Endothelial cell of umbilical vein (primary cell): ENCODE measurements at regions of chr18 and their contacts with region 1.

Region 1: GRCh38 chr18:28995319-28995718 is 818.4 kb upstream of the CDH2 start:
- DNase-seq: peak; percentile 23
- H3K4me3 ChIP-seq: no peak overlapping the region
- H3K27ac ChIP-seq: no peak overlapping the region
- H3K4me1 ChIP-seq: no peaks in the 10 kb centered on the region
- H3K27me3 ChIP-seq: no peaks in the 10 kb centered on the region
- CTCF ChIP-seq: peak in 1 of 2 donors; percentile 29
- POLR2A ChIP-seq: no peak

Region 2: GRCh38 chr18:27735113-27735512 is 1260.2 kb before region 1 on chr18:
- CTCF ChIA-PET with region 1: no interaction called
- POLR2A ChIA-PET with region 1: no interaction called
- dilution Hi-C with region 1: no loop called
- intact Hi-C with region 1: no loop called
- DNase-seq: no peak
- H3K4me3 ChIP-seq: no peak overlapping the region
- H3K27ac ChIP-seq: no peak overlapping the region
- H3K4me1 ChIP-seq: no peaks in the 10 kb centered on the region
- H3K27me3 ChIP-seq: peaks cover 0 to 2% of the 10 kb centered on the region in 2 experiments
- CTCF ChIP-seq: no peak
- POLR2A ChIP-seq: no peak

Region 3: GRCh38 chr18:28984731-28985130 is 10.6 kb before region 1 on chr18:
- CTCF ChIA-PET with region 1: interaction called, 12 read pairs
- POLR2A ChIA-PET with region 1: no interaction called
- dilution Hi-C with region 1: no loop called
- intact Hi-C with region 1: no loop called
- DNase-seq: peak; percentile 50
- H3K4me3 ChIP-seq: no peak overlapping the region
- H3K27ac ChIP-seq: peak overlapping the region; percentile 34
- H3K4me1 ChIP-seq: peaks cover 12% of the 10 kb centered on the region
- H3K27me3 ChIP-seq: no peaks in the 10 kb centered on the region
- CTCF ChIP-seq: no peak
- POLR2A ChIP-seq: no peak